Endothelial cell of umbilical vein (primary cell): ENCODE measurements at regions of chr6 and their contacts with region 1.

Region 1: DNA sequence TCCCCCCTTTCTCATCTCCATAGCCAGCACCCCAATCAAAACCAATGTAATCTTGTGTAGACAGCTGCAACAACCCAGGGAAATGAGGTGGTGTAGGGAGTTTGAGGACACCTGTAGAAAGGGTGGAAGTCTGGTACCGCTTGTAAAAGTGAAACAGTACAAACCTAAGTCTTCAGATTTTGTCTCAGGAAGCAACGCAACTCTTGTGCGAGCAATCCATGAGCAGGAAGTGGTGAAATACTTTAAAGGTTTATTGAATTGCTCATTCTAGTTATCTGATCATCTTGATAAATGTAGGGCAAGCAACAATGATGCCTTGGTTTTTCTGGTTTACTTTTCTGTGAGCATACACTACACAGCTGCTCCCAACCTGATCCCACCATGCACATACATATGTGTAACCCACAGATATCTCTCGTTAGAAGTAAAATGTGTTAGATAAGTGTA is 71.1 kb upstream of the THEMIS start:
- DNase-seq: peak; percentile 46
- H3K4me3 ChIP-seq: no peak overlapping the region
- H3K27ac ChIP-seq: peak overlapping the region; percentile 39
- H3K4me1 ChIP-seq: peaks cover 27% of the 10 kb centered on the region
- H3K27me3 ChIP-seq: no peaks in the 10 kb centered on the region
- CTCF ChIP-seq: no peak
- POLR2A ChIP-seq: no peak

Region 2: DNA sequence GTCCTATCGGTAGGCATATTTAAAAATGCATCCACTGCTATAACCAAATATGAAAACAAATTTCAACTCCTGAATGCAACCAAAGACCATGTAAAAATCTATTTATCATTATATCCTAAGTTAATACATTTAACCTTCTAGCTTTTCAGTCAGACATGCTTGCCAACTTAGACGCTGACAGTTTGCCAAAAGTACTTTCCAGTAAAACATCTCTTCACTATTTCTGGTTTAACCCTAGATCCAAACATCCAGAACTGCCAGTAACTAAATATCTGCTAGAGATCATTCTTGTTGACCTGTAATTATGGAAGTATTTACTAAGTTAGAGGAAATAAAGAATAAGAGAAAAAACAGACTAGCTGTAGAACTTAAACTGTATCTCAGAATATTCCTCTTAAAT is 139.1 kb after region 1 on chr6:
- CTCF ChIA-PET with region 1: no interaction called
- POLR2A ChIA-PET with region 1: interaction called, 13 read pairs
- dilution Hi-C with region 1: no loop called
- intact Hi-C with region 1: no loop called
- DNase-seq: no peak
- H3K4me3 ChIP-seq: no peak overlapping the region
- H3K27ac ChIP-seq: no peak overlapping the region
- H3K4me1 ChIP-seq: no peaks in the 10 kb centered on the region
- H3K27me3 ChIP-seq: no peaks in the 10 kb centered on the region
- CTCF ChIP-seq: no peak
- POLR2A ChIP-seq: no peak

Region 3: DNA sequence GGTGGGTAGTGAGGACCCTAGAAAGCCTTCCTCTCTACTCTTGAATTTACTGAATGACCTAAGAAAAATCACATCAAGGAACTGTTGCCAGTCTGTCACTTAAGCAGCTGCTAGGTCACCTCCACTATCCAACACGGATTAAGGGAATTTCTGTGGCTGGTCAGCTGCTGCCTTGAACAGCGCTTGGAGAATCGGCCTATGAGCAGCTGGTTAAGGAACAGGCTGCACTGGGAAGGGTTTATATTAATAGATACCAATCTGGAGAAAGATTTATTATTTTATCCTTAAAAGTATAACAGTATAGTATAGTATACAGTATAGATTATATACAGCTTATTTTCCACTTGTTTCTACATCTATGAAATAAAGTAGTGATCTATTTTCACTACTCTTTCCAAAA is 541.9 kb after region 1 on chr6:
- CTCF ChIA-PET with region 1: interaction called, 5 read pairs
- POLR2A ChIA-PET with region 1: no interaction called
- dilution Hi-C with region 1: no loop called
- intact Hi-C with region 1: loop called (anchors 1 kb)
- DNase-seq: no peak
- H3K4me3 ChIP-seq: no peak overlapping the region
- H3K27ac ChIP-seq: no peak overlapping the region
- H3K4me1 ChIP-seq: peaks cover 77% of the 10 kb centered on the region
- H3K27me3 ChIP-seq: no peaks in the 10 kb centered on the region
- CTCF ChIP-seq: no peak
- POLR2A ChIP-seq: no peak